ENCODE measurements at regions of chr22 and their contacts with region 1.

Region 1: DNA sequence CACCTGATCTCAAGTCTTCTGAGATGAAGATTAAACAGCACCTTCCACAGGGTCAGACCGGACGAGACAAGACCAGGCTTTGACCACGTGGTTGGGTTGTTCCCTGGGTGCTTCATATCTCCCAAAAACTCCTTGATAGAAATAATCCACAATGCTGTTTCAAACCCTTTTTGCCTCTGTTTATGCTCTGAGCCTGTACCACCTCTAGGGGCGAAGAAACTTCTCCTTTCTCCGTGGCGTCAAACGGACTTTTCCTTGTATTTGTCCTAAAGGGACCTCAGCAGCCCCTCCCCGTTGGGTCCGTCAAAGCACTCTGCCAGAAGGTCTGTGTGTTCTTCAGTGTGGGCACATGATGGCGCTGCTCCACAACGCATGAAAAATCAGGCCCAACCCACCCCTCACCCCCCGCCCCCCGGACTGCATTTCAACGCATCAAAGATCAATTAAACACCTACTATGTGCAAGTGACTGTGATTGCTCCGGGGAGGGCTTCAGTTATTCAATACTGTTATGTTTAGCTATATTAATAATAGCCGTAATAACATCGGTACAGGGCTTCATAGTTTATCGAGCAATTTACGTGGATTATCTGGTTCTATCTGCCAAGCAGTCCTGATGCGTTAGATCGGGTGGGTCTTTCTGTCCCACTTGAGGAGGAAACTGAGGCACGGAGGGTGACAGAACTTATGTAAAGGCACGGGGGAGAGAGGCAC is 17.3 kb upstream of the EIF3D start:
- DNase-seq: peak; percentile 74
- H3K4me3 ChIP-seq: no peak overlapping the region
- H3K27ac ChIP-seq: no peak overlapping the region
- H3K4me1 ChIP-seq: peaks cover 32% of the 10 kb centered on the region
- H3K27me3 ChIP-seq: peaks cover 10% of the 10 kb centered on the region

Region 2: DNA sequence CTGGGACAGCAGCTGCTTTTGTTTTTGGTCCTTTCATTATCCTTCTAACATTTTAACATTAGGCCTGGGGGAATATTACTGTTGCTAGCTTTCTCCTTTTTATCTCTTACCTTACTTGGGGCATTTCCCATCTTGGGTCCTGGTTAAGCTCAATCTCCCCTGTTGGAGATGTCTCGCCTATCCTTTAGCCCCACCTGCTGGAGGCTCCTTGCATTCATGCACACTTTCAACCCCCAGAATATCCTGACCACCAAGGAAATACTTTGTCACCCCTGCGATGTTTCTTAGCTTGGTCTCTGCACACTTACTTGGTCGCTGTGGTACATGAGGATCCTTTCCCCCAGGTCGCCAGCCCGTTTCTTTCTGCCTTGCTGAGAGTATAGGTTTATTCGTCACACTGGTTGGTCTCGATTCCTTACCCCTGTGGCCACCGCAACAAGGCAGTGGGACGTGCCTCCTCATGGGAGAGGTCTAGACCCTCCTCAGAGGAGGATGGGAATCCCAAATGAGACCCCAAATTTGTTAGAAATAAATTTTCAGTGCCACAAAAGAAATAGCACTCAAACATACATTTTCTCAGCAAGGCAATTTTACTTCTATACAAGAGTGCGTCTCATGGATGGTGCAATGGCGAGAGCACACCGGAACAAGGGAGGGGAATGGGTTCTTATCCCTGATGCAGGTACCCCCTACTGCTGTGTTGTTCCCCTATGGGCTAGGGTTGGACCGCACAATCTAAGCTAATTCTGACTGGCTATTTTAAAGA is 59.4 kb before region 1 on chr22:
- in situ Hi-C with region 1: no loop called
- DNase-seq: peak; percentile 62
- H3K4me3 ChIP-seq: no peak overlapping the region
- H3K27ac ChIP-seq: no peak overlapping the region
- H3K4me1 ChIP-seq: peaks cover 4% of the 10 kb centered on the region; the same call in 1 of the 2 replicates
- H3K27me3 ChIP-seq: no peaks in the 10 kb centered on the region

Region 3: DNA sequence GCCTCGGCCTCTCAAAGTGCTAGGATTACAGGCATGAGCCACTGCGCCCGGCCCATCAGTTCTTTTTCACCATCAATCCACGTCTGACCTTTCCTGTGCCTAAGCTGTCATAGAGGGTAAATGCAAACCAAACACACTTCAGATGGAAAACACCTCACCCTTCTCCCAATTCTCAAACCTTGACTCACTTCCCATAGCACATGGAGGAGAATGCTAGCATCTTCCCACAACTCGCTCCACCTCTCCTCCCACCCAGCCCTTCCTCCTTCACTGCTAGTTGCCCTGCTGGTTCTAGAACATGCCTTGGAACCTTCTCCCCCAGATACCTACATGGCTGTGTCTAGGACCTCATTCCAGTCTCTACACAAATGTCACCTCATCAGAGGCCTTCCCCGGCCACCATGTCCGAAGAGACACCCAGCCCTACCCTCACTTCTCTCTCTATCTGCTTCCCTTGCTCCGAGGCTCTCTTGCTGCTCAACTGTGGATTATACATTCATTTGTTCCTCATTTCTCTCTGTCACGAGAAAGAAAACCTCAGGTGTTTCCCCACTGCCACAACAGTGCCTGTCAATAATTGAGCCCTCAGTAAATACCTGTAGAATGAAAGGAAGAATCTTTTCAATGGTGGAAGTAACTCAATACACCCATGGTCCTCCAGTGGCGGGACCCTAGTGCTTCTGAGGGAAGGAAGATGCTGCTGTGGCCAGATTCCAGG is 293.3 kb after region 1 on chr22:
- in situ Hi-C with region 1: loop called (anchors 10 kb)
- DNase-seq: peak; percentile 57
- H3K4me3 ChIP-seq: no peak overlapping the region
- H3K27ac ChIP-seq: no peak overlapping the region
- H3K4me1 ChIP-seq: peaks cover 9% of the 10 kb centered on the region
- H3K27me3 ChIP-seq: peaks cover 43% of the 10 kb centered on the region

Measured in GM23248 (cell line).